Activated CD4-positive, alpha-beta memory T cell treated with anti-CD3 and anti-CD28 coated beads for 36 hours (primary cell): ENCODE measurements at regions of chr6 and their contacts with region 1.

Region 1: GRCh38 chr6:36874443-36875249 is at the start of gene PPIL1:
- DNase-seq: peak; percentile 88
- H3K4me3 Mint-ChIP-seq: peak within 1 kb of the TSS; percentile 98
- H3K27ac Mint-ChIP-seq: peak within 1 kb of the TSS; percentile 99
- H3K4me1 Mint-ChIP-seq: peaks cover 40% of the 10 kb centered on the region
- H3K27me3 Mint-ChIP-seq: peaks cover 2% of the 10 kb centered on the region
- total RNA-seq, gene PPIL1: 38.5 to 40.6 TPM

Region 2: GRCh38 chr6:36985808-36986703 is 111.4 kb after region 1 on chr6 and contains the start of gene MTCH1:
- CTCF ChIA-PET with region 1: interaction called, 4 read pairs
- POLR2A ChIA-PET with region 1: interaction called, 21 read pairs
- intact Hi-C with region 1: no loop called
- DNase-seq: peak; percentile 90
- H3K4me3 Mint-ChIP-seq: peak within 1 kb of the TSS; percentile 99
- H3K27ac Mint-ChIP-seq: peak within 1 kb of the TSS; percentile 90
- H3K4me1 Mint-ChIP-seq: peaks cover 18% of the 10 kb centered on the region
- H3K27me3 Mint-ChIP-seq: no peaks in the 10 kb centered on the region
- total RNA-seq, gene MTCH1: 109 to 114 TPM